PC-9 (cell line): ENCODE measurements at regions of chr2 and their contacts with region 1.

Region 1: DNA sequence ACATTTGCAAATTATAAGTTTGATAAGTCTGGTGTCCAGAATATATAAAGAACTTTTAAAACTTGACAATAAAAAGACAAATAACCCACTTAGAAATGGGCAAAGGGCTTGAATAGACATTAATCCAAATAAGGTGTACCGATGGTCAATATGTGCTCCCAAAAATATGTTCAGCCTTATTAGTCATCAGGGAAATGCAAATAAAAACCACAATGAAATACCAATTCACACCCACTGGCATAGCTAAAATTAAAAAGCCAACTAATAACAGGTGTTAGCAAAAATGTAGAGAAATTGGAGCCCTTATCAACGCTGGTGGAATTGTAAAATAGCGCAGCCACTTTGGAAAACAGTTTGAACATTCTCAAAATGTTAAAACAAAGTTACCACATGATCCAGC is 79.0 kb upstream of the SCG2 start:
- DNase-seq: peak in 1 of 2 experiments; percentile 76
- H3K4me3 ChIP-seq: no peak overlapping the region
- H3K27ac ChIP-seq: 0 out of 2 replicates have a peak overlapping the region, but pooled peaks have one; percentile 8
- H3K4me1 ChIP-seq: peaks cover 11% of the 10 kb centered on the region
- H3K27me3 ChIP-seq: no peaks in the 10 kb centered on the region
- CTCF ChIP-seq: no peak

Region 2: GRCh38 chr2:223008162-223008561 is 673.0 kb before region 1 on chr2:
- CTCF ChIA-PET with region 1: no interaction called
- POLR2A ChIA-PET with region 1: no interaction called
- intact Hi-C with region 1: no loop called
- DNase-seq: no peak
- H3K4me3 ChIP-seq: no peak overlapping the region
- H3K27ac ChIP-seq: no peak overlapping the region
- H3K4me1 ChIP-seq: no peaks in the 10 kb centered on the region
- H3K27me3 ChIP-seq: no peaks in the 10 kb centered on the region
- CTCF ChIP-seq: no peak

Region 3: DNA sequence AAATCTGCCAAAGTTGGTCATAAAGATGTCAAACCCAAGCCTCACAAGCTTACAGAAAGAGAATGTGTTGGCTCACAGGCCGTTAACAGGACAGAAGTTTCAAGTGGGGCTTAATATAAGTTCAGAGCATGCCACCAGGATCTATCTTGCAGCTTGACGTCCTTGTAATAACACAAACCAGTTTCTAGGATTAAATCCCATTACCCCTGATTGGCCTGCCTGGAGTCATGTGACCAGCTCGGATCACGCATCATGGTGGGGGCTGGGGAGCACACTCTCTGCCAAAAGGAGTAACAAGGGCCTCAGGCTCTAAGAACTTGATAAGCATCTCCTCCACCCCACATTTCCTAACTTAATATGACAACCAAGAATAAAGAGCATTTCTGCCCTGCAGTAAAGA is 40.0 kb before region 1 on chr2:
- CTCF ChIA-PET with region 1: interaction called, 10 read pairs
- POLR2A ChIA-PET with region 1: no interaction called
- intact Hi-C with region 1: no loop called
- DNase-seq: peak; percentile 65 to 67
- H3K4me3 ChIP-seq: no peak overlapping the region
- H3K27ac ChIP-seq: no peak overlapping the region
- H3K4me1 ChIP-seq: 0 out of 2 replicates have a peak, but pooled peaks cover 5% of the 10 kb centered on the region
- H3K27me3 ChIP-seq: no peaks in the 10 kb centered on the region
- CTCF ChIP-seq: no peak

Region 4: GRCh38 chr2:223735659-223736244 is 54.6 kb after region 1 on chr2:
- CTCF ChIA-PET with region 1: no interaction called
- POLR2A ChIA-PET with region 1: interaction called, 11 read pairs
- intact Hi-C with region 1: no loop called
- DNase-seq: peak in 1 of 2 experiments; percentile 75
- H3K4me3 ChIP-seq: no peak overlapping the region
- H3K27ac ChIP-seq: no peak overlapping the region
- H3K4me1 ChIP-seq: peaks cover 8% of the 10 kb centered on the region; the same call in 1 of the 2 replicates
- H3K27me3 ChIP-seq: no peaks in the 10 kb centered on the region
- CTCF ChIP-seq: no peak